ENCODE measurements at regions of chr10 and their contacts with region 1.

Region 1: GRCh38 chr10:94320285-94320914 is 42.3 kb downstream of the NOC3L start:
- DNase-seq: no peak
- H3K4me3 ChIP-seq: no peak overlapping the region
- H3K27ac ChIP-seq: no peak overlapping the region
- H3K27me3 ChIP-seq: no peaks in the 10 kb centered on the region
- CTCF ChIP-seq: peak; percentile 79

Region 2: GRCh38 chr10:93893646-93894515 is 426.5 kb before region 1 on chr10 and contains the start of gene SLC35G1:
- CTCF ChIA-PET with region 1: interaction called, 11 read pairs
- POLR2A ChIA-PET with region 1: no interaction called
- DNase-seq: no peak
- H3K4me3 ChIP-seq: peak within 1 kb of the TSS; percentile 80
- H3K27ac ChIP-seq: no peak within 1 kb of the TSS
- H3K27me3 ChIP-seq: peaks cover 6% of the 10 kb centered on the region
- CTCF ChIP-seq: no peak
- polyA plus RNA-seq, gene SLC35G1: 6.7 and 7.0 TPM in 2 replicates

Region 3: DNA sequence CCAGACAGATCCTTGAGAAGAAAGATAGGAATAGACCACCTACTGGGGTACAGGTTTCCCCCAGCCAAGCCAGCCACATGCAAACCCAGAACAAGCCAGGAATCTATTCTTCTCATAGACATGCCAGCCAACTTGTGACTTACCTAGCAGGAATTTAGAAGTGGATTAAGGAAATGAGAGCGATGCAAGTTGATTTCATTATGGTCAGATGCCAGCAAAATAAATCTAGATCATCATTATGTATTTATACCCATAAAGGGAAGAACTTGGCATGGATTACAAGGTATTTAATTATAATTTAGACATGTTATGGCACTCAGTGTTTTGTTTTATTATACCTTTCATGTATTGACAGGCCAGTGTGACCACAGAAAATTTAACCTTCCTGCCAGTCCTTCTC is 393.8 kb before region 1 on chr10:
- CTCF ChIA-PET with region 1: interaction called, 18 read pairs
- POLR2A ChIA-PET with region 1: no interaction called
- DNase-seq: no peak
- H3K4me3 ChIP-seq: no peak overlapping the region
- H3K27ac ChIP-seq: no peak overlapping the region
- H3K27me3 ChIP-seq: no peaks in the 10 kb centered on the region
- CTCF ChIP-seq: no peak

Region 4: GRCh38 chr10:94046098-94046497 is 274.3 kb before region 1 on chr10:
- CTCF ChIA-PET with region 1: interaction called, 13 read pairs
- POLR2A ChIA-PET with region 1: no interaction called
- DNase-seq: no peak
- H3K4me3 ChIP-seq: no peak overlapping the region
- H3K27ac ChIP-seq: no peak overlapping the region
- H3K27me3 ChIP-seq: no peaks in the 10 kb centered on the region
- CTCF ChIP-seq: no peak

Region 5: DNA sequence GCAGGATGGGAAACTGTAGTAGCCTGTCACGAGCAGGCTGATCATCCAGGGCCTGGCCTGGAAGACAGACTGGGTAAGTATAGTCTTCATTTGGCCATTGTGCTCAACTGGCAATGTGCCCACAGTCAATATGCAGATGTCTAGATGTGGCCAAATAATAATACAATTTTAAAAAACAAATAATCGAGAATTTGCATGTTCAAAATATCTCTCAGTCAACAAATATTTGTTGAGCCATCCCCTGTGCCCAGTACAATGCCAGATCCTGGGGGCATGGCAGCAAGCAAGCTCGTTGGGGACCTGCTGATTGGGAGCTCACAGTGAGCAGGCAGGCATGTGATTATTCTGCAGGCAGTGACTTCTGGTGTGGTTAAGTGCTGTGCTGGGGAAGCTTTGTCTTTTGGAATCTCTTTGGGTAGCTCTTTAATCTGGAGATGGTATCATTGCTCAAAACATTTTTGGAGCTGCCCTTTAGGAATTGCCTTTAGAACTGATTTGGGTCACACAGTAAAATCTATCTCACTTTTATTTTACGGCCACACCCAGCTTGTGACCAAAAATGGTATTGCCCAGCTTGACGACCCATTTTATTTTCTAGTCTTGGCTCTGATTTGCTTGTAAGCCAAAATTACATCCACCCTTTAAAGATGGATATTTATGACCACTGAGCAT is 234.5 kb before region 1 on chr10:
- CTCF ChIA-PET with region 1: interaction called, 21 read pairs
- POLR2A ChIA-PET with region 1: no interaction called
- DNase-seq: no peak
- H3K4me3 ChIP-seq: no peak overlapping the region
- H3K27ac ChIP-seq: no peak overlapping the region
- H3K27me3 ChIP-seq: no peaks in the 10 kb centered on the region
- CTCF ChIP-seq: no peak

Region 6: GRCh38 chr10:94334857-94335256 is 14.5 kb after region 1 on chr10:
- CTCF ChIA-PET with region 1: interaction called, 62 read pairs
- POLR2A ChIA-PET with region 1: no interaction called
- DNase-seq: no peak
- H3K4me3 ChIP-seq: no peak overlapping the region
- H3K27ac ChIP-seq: no peak overlapping the region
- H3K27me3 ChIP-seq: no peaks in the 10 kb centered on the region
- CTCF ChIP-seq: no peak

Region 7: DNA sequence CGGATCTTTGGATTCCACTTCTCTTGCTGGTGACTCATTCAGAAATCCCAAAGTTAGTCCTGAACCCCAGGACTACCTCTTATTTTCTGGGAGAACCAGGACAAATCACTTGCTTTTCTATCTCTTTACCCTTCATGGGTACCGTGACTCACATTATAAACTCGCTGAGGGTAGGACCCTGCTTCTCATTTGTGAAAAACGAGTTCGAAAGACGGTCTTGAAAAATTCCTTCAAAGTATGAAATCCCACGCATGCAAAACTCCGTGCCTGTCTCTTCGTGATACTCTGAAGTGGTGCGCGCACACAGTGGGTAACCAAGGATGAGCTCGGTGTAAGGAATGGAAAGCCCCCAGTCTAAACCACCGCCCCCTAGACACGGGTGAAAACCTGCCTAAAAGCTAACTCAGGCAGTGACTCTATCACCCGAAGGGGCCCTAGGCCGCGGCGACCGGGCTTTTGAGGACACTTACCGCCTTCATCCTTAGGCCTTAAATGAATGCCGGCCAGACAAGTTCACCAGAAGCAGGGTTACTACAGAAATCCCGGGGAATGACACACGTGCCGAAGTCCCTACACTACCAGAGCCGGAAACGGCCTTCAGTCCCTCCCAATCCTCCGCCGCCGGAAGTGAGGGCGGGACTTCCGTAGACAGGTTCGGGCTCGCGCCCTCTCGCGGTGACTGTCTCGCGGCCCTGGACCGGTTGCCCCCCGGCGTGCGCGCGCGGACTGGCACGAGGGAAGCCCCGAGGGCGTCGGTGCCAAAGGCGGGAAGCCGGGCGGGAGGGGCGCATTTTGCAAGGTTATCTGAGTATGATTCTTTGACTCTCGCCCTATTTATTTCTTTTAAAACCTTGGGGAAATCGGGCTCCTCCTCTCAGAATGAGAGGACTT is 42.2 kb after region 1 on chr10 and contains the start of gene NOC3L:
- CTCF ChIA-PET with region 1: interaction called, 12 read pairs
- POLR2A ChIA-PET with region 1: no interaction called
- DNase-seq: peak; percentile 80
- H3K4me3 ChIP-seq: peak within 1 kb of the TSS; percentile 89
- H3K27ac ChIP-seq: peak within 1 kb of the TSS; percentile 79
- H3K27me3 ChIP-seq: peaks cover 2% of the 10 kb centered on the region
- CTCF ChIP-seq: peak; percentile 68
- polyA plus RNA-seq, gene NOC3L: 14.8 and 20.9 TPM in 2 replicates

Region 8: DNA sequence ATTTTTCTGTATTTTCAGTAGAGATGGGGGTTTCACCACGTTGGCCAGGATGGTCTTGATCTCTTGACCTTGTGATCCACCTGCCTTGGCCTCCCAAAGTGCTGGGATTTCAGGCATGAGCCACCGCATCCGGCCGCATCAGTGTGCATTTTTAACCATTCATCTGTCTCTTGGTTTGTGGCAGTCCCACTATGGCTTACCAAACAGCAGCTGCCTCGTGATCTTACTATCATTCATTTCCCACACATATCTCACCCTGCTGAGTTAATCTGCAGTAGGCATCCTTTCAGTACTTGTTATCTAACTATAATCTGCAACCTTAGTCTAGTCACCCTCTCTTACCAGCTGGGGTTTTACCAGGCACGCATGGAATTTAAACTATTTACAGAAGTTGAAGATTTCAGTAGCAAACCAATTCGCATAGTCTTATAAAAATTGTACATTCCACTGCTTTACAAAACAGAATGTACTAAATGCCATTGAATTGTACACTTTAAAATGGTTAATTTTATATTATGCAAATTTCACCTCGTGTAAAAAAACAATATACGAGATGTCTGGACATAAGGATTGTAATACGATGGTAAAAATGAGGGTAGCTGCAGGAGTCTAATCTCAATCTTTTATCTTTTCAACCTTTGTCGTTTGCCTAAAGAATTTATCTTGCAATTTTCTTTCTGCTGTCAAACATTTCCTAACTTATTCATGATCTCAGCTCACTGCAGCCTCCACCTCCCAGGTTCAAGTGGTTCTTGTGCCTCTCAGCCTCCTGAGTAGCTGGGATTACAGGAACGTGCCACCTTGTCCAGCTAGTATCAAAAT is 77.4 kb after region 1 on chr10:
- CTCF ChIA-PET with region 1: no interaction called
- POLR2A ChIA-PET with region 1: no interaction called
- DNase-seq: no peak
- H3K4me3 ChIP-seq: no peak overlapping the region
- H3K27ac ChIP-seq: no peak overlapping the region
- H3K27me3 ChIP-seq: no peaks in the 10 kb centered on the region
- CTCF ChIP-seq: no peak

Region 9: DNA sequence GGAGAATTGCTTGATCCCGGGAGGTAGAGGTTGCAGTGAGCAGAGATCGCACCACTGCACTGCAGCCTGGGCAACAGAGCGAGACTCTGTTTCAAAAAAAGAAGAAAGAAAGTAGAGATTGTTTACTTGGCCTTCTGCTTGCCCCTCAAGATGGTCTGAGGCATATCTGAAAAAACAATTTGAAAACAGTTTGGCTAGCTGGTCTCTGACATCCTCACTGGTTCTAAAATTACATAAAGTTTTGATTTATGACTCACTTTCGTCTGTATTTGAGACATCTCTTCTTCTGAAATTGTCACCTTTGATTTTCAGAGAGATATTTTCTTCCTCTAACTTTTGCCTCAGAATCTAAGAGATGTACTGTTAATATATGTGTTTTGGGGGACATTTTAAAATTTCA is 175.6 kb after region 1 on chr10:
- CTCF ChIA-PET with region 1: no interaction called
- POLR2A ChIA-PET with region 1: no interaction called
- DNase-seq: no peak
- H3K4me3 ChIP-seq: no peak overlapping the region
- H3K27ac ChIP-seq: no peak overlapping the region
- H3K27me3 ChIP-seq: no peaks in the 10 kb centered on the region
- CTCF ChIP-seq: no peak

Measured in AG04450 (cell line).